Posterior vena cava (tissue), 2 donors: ENCODE measurements at regions of chr2 and their contacts with region 1.

Region 1: DNA sequence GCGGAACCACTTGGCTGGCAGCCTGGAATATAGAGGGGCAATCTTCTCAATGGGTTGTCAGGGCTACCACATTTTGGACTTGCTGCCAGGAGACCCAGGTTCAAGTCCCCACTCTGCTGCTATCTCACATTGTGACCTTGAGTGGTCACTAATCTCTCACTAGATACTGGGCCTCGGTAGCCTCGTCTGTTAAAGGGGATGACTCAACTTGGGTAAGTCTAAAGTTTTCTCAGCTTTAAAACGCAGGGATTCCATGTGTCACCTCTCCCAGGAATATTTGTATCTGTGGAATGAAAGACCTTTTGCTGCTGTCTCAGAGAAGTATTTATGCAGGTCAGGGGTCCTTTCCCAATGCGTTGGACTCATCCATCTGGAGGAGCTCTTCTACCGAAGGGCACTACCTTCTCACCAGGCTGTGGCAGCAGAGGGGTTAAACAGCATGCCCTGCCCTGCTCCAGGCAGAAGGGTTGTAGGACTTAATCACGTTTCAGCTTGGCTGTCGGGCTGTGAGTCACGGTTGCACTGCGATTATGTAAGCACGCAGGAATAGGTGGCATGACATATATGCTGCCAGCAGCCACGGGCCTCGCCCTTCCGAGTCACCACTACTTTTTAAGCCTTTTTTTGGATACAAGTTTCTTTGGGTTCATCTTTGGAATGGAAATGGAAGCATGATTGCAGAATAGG is 86.5 kb downstream of the SEMA4F start:
- DNase-seq: peak; percentile 85

Region 2: DNA sequence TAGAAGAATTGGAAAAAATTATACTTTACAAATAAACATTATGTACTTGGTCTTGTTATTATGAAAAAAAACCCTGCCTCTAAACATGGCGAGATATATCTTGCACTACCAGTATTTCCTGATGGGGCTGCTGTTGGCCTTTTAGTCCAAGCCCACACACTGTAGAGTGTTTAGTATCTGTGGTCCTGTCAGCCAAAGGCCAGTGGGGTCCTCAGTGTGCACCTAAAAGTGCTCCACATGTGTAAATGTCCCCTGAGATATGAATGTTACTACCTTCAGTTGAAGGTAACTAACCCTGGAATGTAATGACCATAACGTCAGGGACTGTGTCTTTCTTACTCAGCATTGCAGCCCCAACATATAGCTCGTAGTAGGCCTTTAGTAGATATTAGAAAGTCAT is 22.3 kb after region 1 on chr2:
- intact Hi-C with region 1: no loop called
- DNase-seq: no peak

Region 3: GRCh38 chr2:74816540-74817303 is 76.2 kb after region 1 on chr2:
- intact Hi-C with region 1: loop called in 1 of 2 experiments (anchors 2 kb)
- DNase-seq: no peak